Heart left ventricle (tissue), 16 donors: ENCODE measurements at regions of chr5 and their contacts with region 1.

Region 1: DNA sequence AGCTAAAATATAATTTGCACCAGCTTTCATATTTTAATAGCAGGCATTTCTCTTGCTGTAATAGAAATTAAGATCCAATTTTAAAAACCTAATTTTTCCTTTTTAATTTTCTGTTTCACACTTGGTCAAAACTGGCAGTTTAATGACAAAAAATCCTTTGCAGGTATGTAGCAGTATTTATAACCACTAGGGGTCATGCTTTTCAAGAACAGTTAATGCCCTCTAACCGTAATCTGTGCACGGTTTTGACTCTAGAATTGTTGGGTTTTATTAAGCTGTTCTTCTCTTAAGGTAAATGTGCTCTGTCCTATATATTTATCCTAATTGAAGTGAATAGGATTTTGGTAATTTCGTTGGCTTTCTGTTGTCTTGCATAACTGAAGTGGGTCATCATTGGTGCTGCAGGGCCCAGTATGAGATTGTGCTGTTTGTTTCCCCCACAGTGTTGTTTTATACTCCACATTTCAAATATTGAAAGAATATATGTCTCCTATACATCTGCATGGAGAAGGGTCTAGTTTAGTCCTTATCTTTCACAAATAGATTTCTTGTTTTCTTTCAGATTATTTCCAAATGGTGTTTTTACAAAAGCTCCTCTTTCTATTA is 107.4 kb downstream of the SCAMP1 start:
- DNase-seq: no peak
- ATAC-seq: peak in 3 of 4 donors; percentile 61 to 77 (median 75)
- H3K4me3 ChIP-seq: no peak overlapping the region
- H3K27ac ChIP-seq: no peak overlapping the region
- H3K4me1 ChIP-seq: peaks cover 0 to 6% (median 0%) of the 10 kb centered on the region in 12 donors
- H3K27me3 ChIP-seq: no peaks in the 10 kb centered on the region
- CTCF ChIP-seq: peak; percentile 69 to 86 (median 80)
- POLR2A ChIP-seq: no peak

Region 2: GRCh38 chr5:77630258-77631089 is 837.4 kb before region 1 on chr5:
- intact Hi-C with region 1: no loop called
- DNase-seq: peak in 2 of 5 donors; percentile 51 to 67
- ATAC-seq: peak; percentile 42 to 90 (median 80)
- H3K4me3 ChIP-seq: peak overlapping the region in 11 of 12 donors; percentile 23 to 58 (median 44)
- H3K27ac ChIP-seq: no peak overlapping the region
- H3K4me1 ChIP-seq: peaks cover 0 to 31% (median 12%) of the 10 kb centered on the region in 12 donors
- H3K27me3 ChIP-seq: peaks cover 73 to 100% (median 91%) of the 10 kb centered on the region in 9 donors
- CTCF ChIP-seq: peak in 1 of 12 donors; percentile 16
- POLR2A ChIP-seq: no peak

Region 3: DNA sequence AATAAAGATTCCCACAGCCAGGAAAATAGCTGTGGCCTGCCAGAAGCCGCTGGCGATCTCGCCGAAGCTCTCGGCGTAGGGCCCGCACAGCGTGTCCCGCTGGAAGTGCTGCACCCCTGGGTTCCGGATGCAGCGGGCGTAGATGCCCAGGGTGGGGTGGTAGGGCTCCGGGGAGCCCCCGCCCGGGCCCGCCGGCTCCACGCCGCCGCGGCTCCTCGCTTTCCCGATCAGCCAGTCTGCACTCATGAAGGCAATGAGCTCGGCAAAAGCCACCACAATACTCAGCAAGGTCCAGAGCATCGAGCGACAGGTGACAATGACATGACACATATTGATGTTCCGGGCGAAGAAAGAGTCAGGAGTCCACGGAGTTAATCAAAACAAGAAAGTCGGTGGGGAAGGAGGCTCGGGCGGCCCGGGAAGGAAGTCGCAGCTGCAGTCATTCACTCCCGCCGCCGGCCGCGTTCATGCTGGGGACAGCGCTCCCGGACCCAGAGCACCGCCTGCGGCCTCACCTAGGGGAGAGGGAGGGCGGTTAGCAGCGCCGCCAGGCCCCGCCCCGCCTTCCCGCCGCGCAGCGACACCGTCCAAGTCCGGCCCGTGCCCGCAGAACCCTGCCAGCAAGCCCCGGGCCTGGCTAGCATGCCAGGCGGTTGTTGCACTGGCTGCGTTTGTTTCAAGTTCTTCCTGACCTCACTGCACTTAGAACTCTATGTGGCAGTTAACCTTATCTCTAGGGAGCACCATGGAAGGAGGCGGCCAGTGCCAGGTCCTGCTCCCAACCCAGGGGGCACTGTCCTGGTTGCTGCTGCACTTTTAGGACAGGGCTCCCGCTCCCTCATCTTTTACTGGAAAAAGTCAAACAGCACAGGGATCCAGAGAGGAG is 42.3 kb after region 1 on chr5:
- intact Hi-C with region 1: no loop called
- DNase-seq: peak; percentile 70 to 90 (median 85)
- ATAC-seq: peak; percentile 84 to 95 (median 91)
- H3K4me3 ChIP-seq: peak overlapping the region; percentile 24 to 67 (median 48)
- H3K27ac ChIP-seq: peak overlapping the region in 11 of 12 donors; percentile 51 to 85 (median 63)
- H3K4me1 ChIP-seq: peaks cover 0 to 76% (median 33%) of the 10 kb centered on the region in 12 donors
- H3K27me3 ChIP-seq: no peaks in the 10 kb centered on the region
- CTCF ChIP-seq: peak in 5 of 12 donors; percentile 14 to 41 (median 22)
- POLR2A ChIP-seq: peak in 1 of 2 donors; percentile 12

Region 4: DNA sequence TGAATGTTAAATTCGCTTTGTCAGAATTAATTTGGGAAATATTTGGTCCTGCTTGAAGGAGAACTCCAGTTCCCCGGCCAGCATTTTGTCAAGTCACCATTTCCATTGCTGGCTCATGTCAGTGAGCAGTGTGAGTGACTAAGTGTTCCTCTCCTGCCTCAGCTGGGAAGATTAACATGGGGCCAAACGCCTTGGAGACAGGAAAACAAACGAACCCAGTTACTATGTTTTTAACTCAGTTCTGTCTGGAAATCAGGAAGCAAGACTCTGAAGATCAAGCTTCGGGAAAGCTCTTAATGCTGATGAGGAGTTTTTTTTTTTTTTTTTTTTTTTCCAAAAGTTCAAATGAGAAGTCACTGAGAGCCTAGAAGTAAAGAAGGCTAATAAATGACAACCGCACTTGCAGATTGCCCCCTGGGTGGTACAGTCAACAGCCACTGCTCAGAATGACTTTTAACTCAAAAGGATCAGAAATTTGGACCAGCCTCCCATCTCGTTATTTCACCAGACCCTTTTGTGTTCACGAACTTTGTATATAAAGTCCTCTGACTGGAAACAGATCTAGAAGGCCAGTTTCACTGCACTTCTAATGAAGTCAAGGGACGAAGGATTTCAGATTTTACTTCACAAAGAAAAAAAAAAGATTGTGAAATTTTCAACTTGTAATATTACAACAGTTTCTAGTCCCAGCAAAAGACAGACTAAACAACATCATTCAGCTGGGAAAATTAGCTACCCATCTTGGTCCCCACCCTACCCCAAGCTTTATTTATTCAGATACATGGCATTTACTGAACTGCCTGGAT is 59.4 kb after region 1 on chr5:
- intact Hi-C with region 1: loop called in 3 of 10 experiments (anchors 5 kb)
- DNase-seq: peak in 4 of 5 donors; percentile 79 to 82 (median 80)
- ATAC-seq: peak; percentile 89 to 94 (median 91)
- H3K4me3 ChIP-seq: peak overlapping the region in 1 of 12 donors; percentile 20
- H3K27ac ChIP-seq: peak overlapping the region in 11 of 12 donors; percentile 2 to 82 (median 58)
- H3K4me1 ChIP-seq: peaks cover 0 to 79% (median 32%) of the 10 kb centered on the region in 12 donors
- H3K27me3 ChIP-seq: no peaks in the 10 kb centered on the region
- CTCF ChIP-seq: no peak
- POLR2A ChIP-seq: no peak

Region 5: GRCh38 chr5:78627175-78627574 is 159.3 kb after region 1 on chr5:
- intact Hi-C with region 1: loop called in 3 of 10 experiments (anchors 5 to 10 kb)
- DNase-seq: no peak
- ATAC-seq: no peak
- H3K4me3 ChIP-seq: no peak overlapping the region
- H3K27ac ChIP-seq: peak overlapping the region in 1 of 12 donors; percentile 48
- H3K4me1 ChIP-seq: peaks cover 0 to 42% (median 23%) of the 10 kb centered on the region in 12 donors
- H3K27me3 ChIP-seq: no peaks in the 10 kb centered on the region
- CTCF ChIP-seq: peak in 7 of 12 donors; percentile 19 to 42 (median 28)
- POLR2A ChIP-seq: no peak

Region 6: DNA sequence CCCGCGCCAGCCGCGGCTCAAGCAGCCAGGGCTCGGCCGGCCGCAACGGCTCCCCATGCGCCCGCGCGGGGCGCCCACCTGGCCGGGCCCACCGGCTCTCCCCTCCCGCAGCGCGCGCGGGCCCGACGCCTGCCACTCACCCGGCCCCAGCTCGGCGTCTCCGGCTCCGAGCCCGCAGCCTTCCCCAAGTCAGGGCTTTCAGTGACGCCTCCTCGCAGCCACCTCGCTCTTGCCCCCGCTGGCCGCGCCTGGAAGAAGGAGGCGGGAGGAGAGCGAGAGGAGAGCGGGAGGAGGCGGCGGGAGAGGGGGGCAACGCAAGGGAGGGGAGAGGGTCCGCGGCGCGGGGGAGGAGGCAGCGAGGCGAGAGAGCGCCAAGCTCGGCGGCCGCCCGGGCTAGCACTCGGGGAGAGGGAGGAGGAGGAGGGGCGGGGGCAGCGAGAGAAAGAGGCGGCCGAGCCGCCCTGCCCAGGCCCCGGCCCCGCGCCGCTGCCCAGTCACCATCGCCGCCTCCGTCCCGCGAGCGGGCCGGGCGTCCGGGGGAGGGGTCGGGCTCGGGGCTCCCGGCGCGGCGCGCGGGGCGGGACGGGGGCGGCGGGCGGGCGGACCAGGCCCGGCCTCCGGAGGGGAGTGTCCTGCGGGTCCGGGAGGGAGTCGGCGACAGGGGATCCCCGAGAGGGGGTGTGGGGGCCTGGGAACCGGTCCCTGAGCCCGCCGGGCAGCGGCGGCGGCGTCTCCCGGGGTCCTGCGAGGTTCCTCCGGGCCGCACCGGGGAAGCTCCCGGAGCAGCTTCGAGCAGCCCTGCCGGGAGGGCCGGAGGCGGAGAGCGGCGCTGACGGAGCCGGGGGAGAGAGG is 180.7 kb after region 1 on chr5 and contains the start of gene LHFPL2:
- intact Hi-C with region 1: loop called in 5 of 10 experiments (anchors 2 to 10 kb)
- DNase-seq: peak; percentile 78 to 88 (median 83)
- ATAC-seq: peak; percentile 44 to 91 (median 84)
- H3K4me3 ChIP-seq: peak within 1 kb of the TSS; percentile 50 to 97 (median 78)
- H3K27ac ChIP-seq: peak within 1 kb of the TSS; percentile 87 to 94 (median 91)
- H3K4me1 ChIP-seq: peaks cover 0 to 30% (median 14%) of the 10 kb centered on the region in 12 donors
- H3K27me3 ChIP-seq: peaks cover 0 to 4% (median 0%) of the 10 kb centered on the region in 9 donors
- CTCF ChIP-seq: no peak
- POLR2A ChIP-seq: peak in 1 of 2 donors; percentile 15
- total RNA-seq, gene LHFPL2: 5.6 to 35.6 (median 10.1) TPM

Region 7: GRCh38 chr5:78899922-78900362 is 432.1 kb after region 1 on chr5:
- intact Hi-C with region 1: loop called in 1 of 10 experiments (anchors 10 kb)
- DNase-seq: no peak
- ATAC-seq: peak in 1 of 4 donors; percentile 36
- H3K4me3 ChIP-seq: no peak overlapping the region
- H3K27ac ChIP-seq: no peak overlapping the region
- H3K4me1 ChIP-seq: peaks cover 0 to 11% (median under 1%) of the 10 kb centered on the region in 12 donors
- H3K27me3 ChIP-seq: no peaks in the 10 kb centered on the region
- CTCF ChIP-seq: peak; percentile 40 to 74 (median 58)
- POLR2A ChIP-seq: no peak